AG04450 (cell line): ENCODE measurements at regions of chr12 and their contacts with region 1.

Region 1: GRCh38 chr12:53205747-53206419 is 1.2 kb downstream of the ITGB7 start:
- DNase-seq: peak; percentile 61
- H3K4me3 ChIP-seq: no peak overlapping the region
- H3K27ac ChIP-seq: peak overlapping the region; percentile 81
- H3K27me3 ChIP-seq: no peaks in the 10 kb centered on the region
- CTCF ChIP-seq: no peak

Region 2: DNA sequence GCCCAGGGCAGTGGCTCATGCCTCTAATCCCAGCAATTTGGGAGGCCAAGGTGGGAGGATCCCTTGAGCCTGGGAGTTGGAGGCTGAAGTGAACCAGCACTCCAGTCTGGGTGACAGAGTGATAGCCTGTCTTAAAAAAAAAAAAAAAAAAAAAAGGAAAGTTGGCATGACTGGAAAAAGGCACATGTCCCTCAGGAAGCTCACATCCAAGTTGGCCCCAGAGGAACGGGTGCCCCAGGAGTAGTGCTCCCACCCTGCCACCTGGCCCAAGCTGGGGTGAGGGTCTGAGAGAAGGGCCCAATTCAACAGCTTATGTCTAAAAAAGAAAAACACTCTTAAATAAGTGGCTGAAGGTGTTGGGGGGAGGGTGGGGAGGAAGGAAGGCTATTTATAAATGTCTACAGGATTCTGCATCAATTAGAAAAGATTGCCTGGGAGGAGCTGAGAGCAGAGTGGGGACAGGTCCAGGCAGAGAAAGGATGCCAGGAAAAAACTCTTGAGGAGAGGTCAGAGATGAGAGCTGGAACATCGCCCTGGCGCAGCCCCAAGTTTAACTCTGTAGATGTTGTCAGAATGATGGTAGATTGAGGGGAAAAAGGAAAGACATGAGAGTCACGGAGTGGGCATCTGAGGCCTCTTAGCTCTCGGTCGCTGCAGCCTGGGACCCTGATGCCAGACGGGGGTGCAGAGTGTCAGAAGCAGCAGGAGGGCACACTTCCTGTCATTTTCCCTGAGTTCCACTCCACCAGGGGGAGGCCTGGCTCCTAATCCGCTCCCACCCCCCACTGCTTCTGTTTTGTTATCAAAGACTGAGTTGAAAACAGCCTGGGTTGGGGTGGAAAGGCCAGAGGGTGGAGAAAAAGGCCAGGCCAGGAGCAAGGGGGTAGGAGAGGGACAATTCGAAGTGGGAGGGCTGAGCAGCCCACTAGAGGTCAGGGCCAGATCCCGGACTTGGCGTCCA is 134.0 kb before region 1 on chr12:
- CTCF ChIA-PET with region 1: no interaction called
- POLR2A ChIA-PET with region 1: interaction called, 18 read pairs
- DNase-seq: no peak
- H3K4me3 ChIP-seq: no peak overlapping the region
- H3K27ac ChIP-seq: peak overlapping the region; percentile 11
- H3K27me3 ChIP-seq: no peaks in the 10 kb centered on the region
- CTCF ChIP-seq: peak; percentile 50

Region 3: DNA sequence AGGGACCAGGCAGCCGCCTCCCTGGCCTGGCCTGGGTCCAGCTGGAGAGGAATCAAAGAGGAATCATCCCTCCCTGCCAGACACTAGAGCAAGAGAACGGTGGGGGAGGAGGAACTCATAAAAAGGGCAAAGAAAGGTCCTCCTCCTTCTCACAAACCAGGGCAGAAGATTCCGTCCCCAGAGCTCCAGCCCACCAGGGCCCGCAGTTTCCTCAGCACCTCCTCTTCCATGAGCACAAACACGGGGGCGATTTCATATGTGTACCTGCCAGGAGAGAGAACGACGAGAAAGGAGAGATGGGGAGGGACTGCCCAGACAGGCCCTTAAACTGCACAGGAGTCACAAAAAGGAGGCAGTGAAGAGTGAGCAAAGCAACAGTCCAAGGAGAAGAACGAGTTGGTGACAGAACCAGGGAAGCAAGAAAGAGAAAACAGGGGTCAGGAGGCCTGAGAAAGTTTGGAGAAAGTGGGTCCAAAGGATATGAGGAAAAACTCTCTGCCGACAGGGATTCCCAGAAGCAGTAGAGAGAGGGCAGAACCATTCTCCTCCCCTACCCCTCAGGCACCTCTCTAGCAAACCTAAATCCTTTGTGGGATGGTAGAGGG is 34.1 kb before region 1 on chr12:
- CTCF ChIA-PET with region 1: no interaction called
- POLR2A ChIA-PET with region 1: no interaction called
- DNase-seq: no peak
- H3K4me3 ChIP-seq: no peak overlapping the region
- H3K27ac ChIP-seq: no peak overlapping the region
- H3K27me3 ChIP-seq: no peaks in the 10 kb centered on the region
- CTCF ChIP-seq: no peak